Activated naive CD4-positive, alpha-beta T cell treated with anti-CD3 and anti-CD28 coated beads for 36 hours (primary cell): ENCODE measurements at regions of chr22 and their contacts with region 1.

Region 1: DNA sequence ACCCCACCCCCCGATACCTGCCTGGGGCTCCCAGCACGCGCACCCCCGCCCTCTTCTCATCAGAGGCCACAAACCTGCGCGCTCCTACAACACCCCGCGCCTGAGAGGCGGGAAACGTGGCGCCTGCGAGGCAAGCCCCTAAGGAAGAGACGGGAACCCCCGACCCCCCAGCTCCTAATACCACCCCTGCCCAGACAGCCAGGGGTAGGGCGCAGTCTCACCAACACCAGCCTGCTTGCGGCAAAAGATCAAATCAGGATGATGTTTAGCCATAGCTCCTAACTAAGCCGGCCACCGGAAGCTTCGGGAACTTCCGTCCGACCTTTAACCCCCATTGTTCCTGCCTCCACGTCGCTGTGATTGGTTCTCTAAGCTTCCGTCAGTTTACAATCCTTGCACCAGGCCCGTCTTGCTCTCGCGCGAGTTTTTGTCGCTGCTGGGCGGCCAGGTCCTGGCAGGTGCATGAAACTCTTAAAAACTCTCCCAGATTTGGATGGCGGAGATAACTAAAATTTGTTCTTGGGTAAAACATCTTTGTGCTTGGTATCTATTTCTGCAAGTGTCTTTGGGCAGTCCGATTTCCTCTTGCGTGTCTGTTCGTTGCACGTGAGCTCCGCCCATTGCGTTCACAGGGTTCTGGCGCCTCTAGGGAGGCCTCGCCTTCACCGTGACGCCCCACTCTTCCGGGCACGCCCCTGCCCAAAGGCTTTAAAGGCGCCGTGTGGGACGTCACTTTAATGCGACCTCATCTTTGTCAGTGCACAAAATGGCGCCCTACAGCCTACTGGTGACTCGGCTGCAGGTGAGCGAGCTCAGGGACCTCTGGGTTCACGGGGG is at the starts of genes ACO2 and PHF5A:
- DNase-seq: peak; percentile 99
- H3K4me3 Mint-ChIP-seq: peak within 1 kb of the TSS; percentile 75
- H3K27ac Mint-ChIP-seq: peak within 1 kb of the TSS; percentile 96
- H3K4me1 Mint-ChIP-seq: peaks cover 62% of the 10 kb centered on the region
- H3K27me3 Mint-ChIP-seq: no peaks in the 10 kb centered on the region
- total RNA-seq, gene ACO2: 113 to 118 TPM
- total RNA-seq, gene PHF5A: 67.5 to 69.0 TPM

Region 2: DNA sequence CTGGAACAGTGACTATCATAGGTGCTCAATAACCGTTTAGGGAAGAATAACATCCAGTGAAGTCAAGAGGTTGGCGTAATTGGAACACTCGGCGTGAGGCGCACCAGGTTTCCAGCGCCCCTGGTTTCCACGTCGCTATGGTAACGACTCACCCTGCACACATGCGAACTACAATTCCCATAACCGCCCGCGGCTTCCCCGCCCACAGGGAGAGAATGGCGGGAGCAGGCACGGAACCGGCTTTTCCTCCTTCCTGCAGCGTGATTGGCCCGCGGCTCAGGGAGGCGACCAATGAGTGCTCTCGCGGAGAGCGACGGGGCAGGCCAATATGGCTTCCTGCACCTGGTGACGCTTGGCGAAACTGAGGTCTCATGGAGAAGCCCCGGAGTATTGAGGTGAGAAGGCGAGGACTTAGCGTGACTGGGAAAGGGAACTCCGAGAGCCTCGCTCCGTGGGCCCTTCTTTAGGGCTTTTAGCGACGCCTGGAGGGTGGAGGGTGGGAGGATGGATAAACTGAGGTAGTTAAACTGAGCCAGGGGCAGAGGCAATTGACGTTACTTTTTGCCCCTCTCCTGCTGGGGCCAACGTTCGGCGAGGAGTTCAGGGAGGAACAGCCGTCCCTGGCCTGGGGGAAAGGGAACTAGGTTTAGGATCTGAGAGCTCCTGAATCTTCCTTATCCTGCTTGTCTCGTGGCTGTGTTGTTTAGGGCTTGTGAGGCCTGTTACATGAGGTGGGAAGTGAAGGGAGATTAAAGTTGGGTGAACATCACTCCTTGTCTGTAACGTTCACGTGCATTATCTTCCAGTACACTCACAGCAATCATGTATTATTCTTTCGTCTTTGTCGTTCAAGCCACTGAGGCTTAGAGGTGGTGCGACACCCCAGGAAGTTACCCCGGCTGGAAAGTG is 263.4 kb before region 1 on chr22 and contains the start of gene L3MBTL2:
- CTCF ChIA-PET with region 1: no interaction called
- intact Hi-C with region 1: loop called (anchors 1 kb)
- DNase-seq: peak; percentile 99
- H3K4me3 Mint-ChIP-seq: peak within 1 kb of the TSS; percentile 88
- H3K27ac Mint-ChIP-seq: peak within 1 kb of the TSS; percentile 86
- H3K4me1 Mint-ChIP-seq: peaks cover 33% of the 10 kb centered on the region
- H3K27me3 Mint-ChIP-seq: no peaks in the 10 kb centered on the region
- total RNA-seq, gene L3MBTL2: 19.4 to 22.3 TPM

Region 3: GRCh38 chr22:41436322-41437113 is 32.1 kb before region 1 on chr22:
- CTCF ChIA-PET with region 1: no interaction called
- intact Hi-C with region 1: no loop called
- DNase-seq: no peak
- H3K4me3 Mint-ChIP-seq: no peak overlapping the region
- H3K27ac Mint-ChIP-seq: no peak overlapping the region
- H3K4me1 Mint-ChIP-seq: peaks cover 4% of the 10 kb centered on the region
- H3K27me3 Mint-ChIP-seq: no peaks in the 10 kb centered on the region

Region 4: GRCh38 chr22:41521126-41521525 is 52.5 kb after region 1 on chr22:
- CTCF ChIA-PET with region 1: no interaction called
- intact Hi-C with region 1: no loop called
- DNase-seq: no peak
- H3K4me3 Mint-ChIP-seq: no peak overlapping the region
- H3K27ac Mint-ChIP-seq: no peak overlapping the region
- H3K4me1 Mint-ChIP-seq: peaks cover 29% of the 10 kb centered on the region
- H3K27me3 Mint-ChIP-seq: no peaks in the 10 kb centered on the region

Region 5: GRCh38 chr22:41532908-41533825 is 64.6 kb after region 1 on chr22:
- CTCF ChIA-PET with region 1: no interaction called
- intact Hi-C with region 1: no loop called
- DNase-seq: peak; percentile 78
- H3K4me3 Mint-ChIP-seq: no peak overlapping the region
- H3K27ac Mint-ChIP-seq: no peak overlapping the region
- H3K4me1 Mint-ChIP-seq: peaks cover 2% of the 10 kb centered on the region
- H3K27me3 Mint-ChIP-seq: no peaks in the 10 kb centered on the region

Region 6: DNA sequence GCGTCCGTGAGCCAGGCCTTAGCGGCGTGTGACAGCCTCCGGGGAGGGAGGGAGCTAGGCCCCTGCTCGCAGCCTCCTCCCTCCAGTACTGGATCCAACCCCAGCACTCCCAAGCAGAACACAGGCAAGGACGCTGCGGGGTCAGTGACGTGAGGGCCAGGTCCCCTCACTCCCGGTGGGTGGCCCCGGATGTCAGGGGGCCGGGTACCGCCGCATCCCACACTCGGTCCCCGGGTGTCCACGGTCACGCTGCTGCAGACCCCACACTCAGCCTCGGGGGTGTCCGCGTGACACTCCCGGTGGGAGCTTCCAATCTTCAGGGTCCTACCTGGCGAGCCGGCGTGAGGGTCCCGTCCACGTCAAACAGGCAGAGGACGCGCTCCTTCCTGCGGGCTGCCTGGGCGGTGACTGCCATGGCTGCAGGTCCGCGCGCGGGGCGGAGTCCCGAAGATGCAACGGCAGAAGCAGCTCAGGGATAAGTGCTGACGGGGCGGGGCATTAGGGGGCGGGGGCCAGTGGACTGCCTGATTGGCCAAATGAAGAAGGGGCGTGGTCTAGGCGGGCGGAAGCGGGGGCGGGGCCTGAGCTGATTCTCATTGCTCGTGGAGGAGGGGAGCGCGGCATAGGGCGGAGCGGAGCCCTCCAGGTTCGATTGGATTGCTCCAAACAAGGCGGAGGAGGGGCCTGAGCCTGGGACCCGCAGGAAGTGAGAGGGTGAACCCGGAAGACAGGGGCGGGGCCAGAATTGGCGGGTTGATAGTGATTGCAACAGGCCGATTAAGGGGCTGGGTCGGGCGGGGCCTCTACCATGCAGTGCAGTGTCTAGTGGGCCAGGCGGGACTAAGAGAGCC is 121.0 kb after region 1 on chr22 and contains the start of gene PMM1:
- CTCF ChIA-PET with region 1: no interaction called
- intact Hi-C with region 1: loop called (anchors 1 kb)
- DNase-seq: peak; percentile 100
- H3K4me3 Mint-ChIP-seq: peak within 1 kb of the TSS; percentile 93
- H3K27ac Mint-ChIP-seq: peak within 1 kb of the TSS; percentile 84
- H3K4me1 Mint-ChIP-seq: peaks cover 12% of the 10 kb centered on the region
- H3K27me3 Mint-ChIP-seq: no peaks in the 10 kb centered on the region
- total RNA-seq, gene PMM1: 35.3 to 35.6 TPM